Heart left ventricle (tissue), 16 donors: ENCODE measurements at regions of chr22 and their contacts with region 1.

Region 1: GRCh38 chr22:25447686-25448434 is 116.6 kb upstream of the GRK3 start:
- DNase-seq: peak; percentile 88 to 97 (median 92)
- ATAC-seq: peak; percentile 91 to 97 (median 95)
- H3K4me3 ChIP-seq: peak overlapping the region; percentile 38 to 95 (median 72)
- H3K27ac ChIP-seq: peak overlapping the region; percentile 28 to 86 (median 78)
- H3K4me1 ChIP-seq: peaks cover 0 to 45% (median 24%) of the 10 kb centered on the region in 12 donors
- H3K27me3 ChIP-seq: no peaks in the 10 kb centered on the region
- CTCF ChIP-seq: peak; percentile 78 to 99 (median 92)
- POLR2A ChIP-seq: peak in 1 of 2 donors; percentile 65

Region 2: GRCh38 chr22:25362215-25362882 is 85.5 kb before region 1 on chr22:
- intact Hi-C with region 1: loop called in 5 of 10 experiments (anchors 2 to 10 kb)
- DNase-seq: peak; percentile 61 to 84 (median 67)
- ATAC-seq: peak in 3 of 4 donors; percentile 54 to 65 (median 57)
- H3K4me3 ChIP-seq: no peak overlapping the region
- H3K27ac ChIP-seq: peak overlapping the region in 1 of 12 donors; percentile 27
- H3K4me1 ChIP-seq: peaks cover 0 to 47% (median 26%) of the 10 kb centered on the region in 12 donors
- H3K27me3 ChIP-seq: no peaks in the 10 kb centered on the region
- CTCF ChIP-seq: peak; percentile 75 to 94 (median 86)
- POLR2A ChIP-seq: no peak

Region 3: DNA sequence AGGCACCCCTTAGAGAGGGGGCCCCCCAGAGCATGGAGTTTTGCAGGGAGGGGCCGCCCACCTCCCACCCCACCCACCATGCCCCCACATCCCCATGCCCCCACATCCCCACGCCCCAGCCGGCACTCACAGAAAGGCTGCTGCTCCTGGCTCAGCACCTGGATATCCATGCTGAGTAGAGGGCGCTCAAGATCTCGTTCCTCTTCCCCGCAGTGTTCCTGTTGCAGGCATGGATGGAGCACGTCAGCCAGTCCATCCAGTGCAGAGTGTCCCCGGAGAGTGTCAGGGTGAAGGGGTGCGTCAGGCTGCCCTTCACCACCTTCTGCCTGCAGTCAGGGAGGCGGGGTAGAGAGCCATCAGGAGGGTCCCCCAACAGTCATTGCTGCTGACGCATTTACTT is 72.2 kb before region 1 on chr22:
- intact Hi-C with region 1: no loop called
- DNase-seq: no peak
- ATAC-seq: no peak
- H3K4me3 ChIP-seq: no peak overlapping the region
- H3K27ac ChIP-seq: no peak overlapping the region
- H3K4me1 ChIP-seq: peaks cover 0 to 8% (median 0%) of the 10 kb centered on the region in 12 donors
- H3K27me3 ChIP-seq: no peaks in the 10 kb centered on the region
- CTCF ChIP-seq: no peak
- POLR2A ChIP-seq: no peak

Region 4: DNA sequence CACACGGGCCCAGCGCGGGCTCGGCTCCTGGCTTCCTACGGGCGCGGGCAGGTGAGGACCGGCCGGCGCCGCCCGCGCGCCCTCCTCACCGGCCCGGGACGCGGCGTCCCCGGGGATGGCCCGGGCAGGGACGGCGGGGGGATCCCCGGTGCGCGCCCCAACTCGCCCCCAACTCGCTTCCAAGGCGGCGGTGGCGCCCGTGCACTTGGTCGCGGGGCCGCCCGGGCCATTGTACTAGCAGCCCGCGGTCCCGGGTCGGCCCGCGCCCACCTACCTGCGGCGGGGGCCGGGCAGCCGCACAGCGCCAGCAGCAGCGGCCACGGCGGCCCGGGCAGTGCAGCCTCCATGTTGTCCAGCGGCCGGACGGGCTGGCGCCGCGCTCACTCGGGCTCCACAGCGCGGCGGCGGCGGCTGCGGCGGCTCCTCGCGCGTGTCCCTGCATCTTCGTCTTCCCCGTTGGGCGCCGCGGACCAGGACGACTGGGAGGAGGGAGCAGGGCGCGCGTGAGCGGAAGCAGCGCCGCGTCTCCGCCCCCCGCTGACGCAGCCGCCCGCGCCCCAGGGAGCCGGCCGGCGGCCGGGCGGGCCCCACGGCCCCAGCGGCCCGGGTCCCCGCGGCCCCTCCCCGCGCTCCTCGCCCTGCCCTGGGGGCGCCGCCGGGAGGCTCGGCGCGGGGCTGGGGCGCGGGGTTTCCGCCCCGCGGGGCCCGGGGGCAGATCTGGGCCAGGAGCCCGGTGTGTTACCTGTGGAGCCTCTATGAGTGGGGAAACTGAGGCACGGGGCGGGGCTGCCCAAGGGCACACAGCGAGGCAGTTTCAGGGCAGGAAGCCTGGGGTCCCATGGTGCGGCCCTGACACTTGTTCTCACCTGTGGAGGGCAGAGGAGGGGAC is 42.7 kb before region 1 on chr22:
- intact Hi-C with region 1: loop called in 1 of 10 experiments (anchors 5 kb)
- DNase-seq: peak; percentile 84 to 95 (median 89)
- ATAC-seq: peak; percentile 38 to 80 (median 68)
- H3K4me3 ChIP-seq: peak overlapping the region; percentile 53 to 87 (median 72)
- H3K27ac ChIP-seq: peak overlapping the region; percentile 69 to 97 (median 88)
- H3K4me1 ChIP-seq: peaks cover 16 to 55% (median 44%) of the 10 kb centered on the region in 12 donors
- H3K27me3 ChIP-seq: no peaks in the 10 kb centered on the region
- CTCF ChIP-seq: no peak
- POLR2A ChIP-seq: peak in 1 of 2 donors; percentile 78

Region 5: DNA sequence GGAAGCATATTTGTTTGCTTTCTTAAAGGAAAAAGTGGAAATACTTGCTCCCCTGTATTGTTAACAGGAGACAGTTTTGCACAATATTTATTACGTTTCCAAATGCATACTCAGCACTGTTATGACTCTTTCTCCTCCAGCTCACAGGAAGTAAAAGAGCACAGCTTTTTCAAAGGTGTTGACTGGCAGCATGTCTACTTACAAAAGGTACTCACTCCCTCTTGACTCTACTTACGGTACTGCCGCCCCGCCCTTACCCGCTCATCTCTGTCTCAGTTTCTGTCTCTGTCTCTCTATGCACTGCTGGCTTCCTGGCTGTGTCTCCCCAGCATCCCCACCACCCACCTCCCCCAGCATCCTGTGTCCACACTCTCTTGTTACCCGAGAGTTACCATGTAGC is 261.9 kb after region 1 on chr22:
- intact Hi-C with region 1: loop called in 3 of 10 experiments (anchors 5 kb)
- DNase-seq: no peak
- ATAC-seq: no peak
- H3K4me3 ChIP-seq: no peak overlapping the region
- H3K27ac ChIP-seq: no peak overlapping the region
- H3K4me1 ChIP-seq: peaks cover 0 to 10% (median 0%) of the 10 kb centered on the region in 12 donors
- H3K27me3 ChIP-seq: no peaks in the 10 kb centered on the region
- CTCF ChIP-seq: no peak
- POLR2A ChIP-seq: no peak